ENCODE measurements at regions of chr6 and their contacts with region 1.

Region 1: DNA sequence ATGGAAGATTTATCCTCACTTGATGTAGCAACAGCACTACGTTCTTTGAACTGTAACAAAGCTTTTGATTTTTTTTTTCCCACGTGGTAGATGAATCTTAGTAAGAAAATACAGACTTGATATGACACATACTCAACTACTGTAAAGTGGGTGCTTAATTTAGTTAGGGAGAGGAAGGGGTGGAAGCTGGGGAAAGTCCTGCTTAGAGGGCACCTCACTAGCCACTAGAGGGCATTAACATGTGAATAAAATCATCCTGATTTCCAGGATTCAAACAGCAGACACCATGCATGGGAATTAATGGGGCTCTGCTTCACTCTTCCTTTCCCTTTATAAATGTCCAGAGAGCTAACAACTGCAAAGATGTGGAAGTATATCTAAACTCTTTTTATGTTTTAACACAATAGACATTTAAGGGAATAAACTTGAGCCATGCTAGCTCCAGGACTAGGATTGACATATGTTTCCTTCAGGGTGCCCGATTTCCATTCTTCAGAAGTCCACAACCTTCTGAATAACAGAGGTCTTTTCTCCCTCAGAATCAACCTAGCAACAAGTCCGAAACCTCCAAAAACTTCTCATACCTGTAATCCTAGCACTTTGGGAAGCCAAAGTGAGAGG is 250.1 kb downstream of the ATXN1 start:
- DNase-seq: peak; percentile 42

Region 2: DNA sequence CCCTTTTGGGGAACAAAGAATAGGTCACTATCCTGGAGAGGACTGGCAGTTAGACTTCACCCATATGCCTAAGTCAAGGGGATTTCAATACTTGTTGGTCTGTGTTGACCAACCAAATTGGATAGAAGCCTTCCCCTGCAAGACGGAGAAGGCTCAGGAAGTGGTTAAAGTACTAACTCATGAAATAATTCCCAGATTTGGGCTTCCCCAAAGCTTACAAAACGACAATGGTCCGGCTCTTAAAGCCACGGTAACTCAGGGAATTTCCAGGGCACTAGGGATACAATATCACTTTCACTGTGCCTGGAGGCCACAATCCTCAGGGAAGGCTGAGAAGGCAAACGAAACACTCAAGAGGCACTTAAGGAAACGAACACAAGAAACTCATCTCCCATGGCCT is 49.7 kb before region 1 on chr6:
- CTCF ChIA-PET with region 1: no interaction called
- POLR2A ChIA-PET with region 1: no interaction called
- DNase-seq: no peak

Region 3: DNA sequence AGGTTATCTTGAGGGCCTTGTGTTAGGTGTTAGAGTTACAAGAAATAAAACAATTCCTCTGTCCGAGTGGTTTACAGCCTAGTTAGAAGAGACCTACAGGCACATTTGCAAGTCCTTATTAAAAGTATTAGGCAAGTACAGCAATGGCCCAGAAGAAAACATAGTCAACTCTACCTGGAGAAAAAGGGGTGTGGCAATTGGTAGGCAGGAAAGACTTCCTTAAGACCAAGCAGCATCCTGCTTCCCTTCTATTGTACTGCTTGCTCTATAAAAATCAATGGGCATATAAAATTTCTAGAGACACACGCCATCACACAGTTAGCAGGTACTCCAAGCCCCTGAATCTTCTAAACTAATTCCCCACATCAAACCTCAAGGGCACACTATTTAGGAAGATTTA is 64.5 kb after region 1 on chr6:
- CTCF ChIA-PET with region 1: no interaction called
- POLR2A ChIA-PET with region 1: no interaction called
- DNase-seq: no peak

Region 4: GRCh38 chr6:16585805-16586204 is 74.7 kb after region 1 on chr6:
- CTCF ChIA-PET with region 1: no interaction called
- POLR2A ChIA-PET with region 1: no interaction called
- DNase-seq: no peak

Region 5: DNA sequence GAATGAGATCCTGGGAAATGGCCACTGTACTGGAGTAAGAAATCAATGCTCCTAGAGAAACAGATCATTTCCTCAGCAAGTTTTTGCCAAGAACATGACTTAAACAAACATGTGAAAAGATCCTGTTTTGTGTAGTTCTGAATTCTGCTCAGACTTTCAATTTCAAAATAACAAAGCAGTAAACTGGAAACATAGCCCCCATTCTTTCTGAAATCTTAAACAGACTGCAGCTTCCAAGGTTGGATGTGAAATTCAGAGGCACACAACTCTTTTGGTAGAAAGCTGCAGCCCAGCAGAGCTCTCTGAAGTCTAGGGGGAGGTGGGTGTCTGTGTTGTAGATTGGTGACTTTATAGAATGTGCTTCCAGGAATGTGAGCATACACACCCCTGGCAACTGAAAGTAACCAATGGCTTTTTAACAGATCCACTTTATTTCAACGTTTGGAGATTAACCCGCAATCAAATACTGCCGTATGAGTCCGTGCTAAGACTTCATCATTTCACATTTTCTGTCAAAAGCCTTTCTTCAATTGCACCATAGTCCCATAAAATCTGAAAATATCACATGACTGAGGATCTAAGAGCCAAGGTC is 163.7 kb after region 1 on chr6:
- CTCF ChIA-PET with region 1: interaction called, 10 read pairs
- POLR2A ChIA-PET with region 1: no interaction called
- DNase-seq: no peak

Measured in HEK293T (cell line).